Activated CD4-positive, alpha-beta T cell treated with anti-CD3 and anti-CD28 coated beads, Interleukin-2, amount 10 ng/mL, durations not matched to agents 7 days and 5 days (primary cell): ENCODE measurements at regions of chr15 and their contacts with region 1.

Region 1: DNA sequence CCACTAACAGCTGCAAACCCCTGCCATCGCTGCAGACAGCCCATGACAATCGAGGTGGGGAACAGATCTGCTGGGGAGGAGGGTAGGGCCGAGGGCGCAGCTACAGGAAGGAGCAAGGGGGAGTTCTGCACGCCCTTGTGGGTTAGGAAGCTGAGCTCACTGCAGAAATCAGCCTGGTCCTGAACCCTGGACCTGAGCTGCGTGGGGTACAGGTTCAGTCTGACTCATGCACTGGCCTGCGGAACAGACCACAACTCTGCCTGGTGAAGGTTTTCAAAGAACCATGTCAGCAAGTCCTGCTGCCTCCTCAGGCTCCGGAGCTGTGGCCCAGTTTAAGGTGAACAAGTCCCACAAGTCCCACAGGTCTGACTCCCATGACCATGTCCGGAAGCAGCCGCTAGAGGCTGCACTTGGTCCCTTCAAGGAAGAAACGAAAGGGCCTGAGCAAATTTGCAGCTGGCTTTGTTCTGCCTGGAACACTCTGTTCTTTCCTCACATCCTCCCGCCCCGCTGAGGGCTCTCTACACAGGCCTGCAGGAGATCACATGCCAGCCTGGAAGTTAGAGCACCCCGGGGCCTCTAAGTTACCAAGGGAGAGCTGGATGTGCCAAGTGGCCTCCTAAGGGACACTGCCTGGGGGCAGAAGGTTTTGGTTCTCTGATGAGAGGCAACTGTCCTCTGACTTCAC is 49.4 kb upstream of the AKAP13 start:
- DNase-seq: peak; percentile 81
- H3K4me3 Mint-ChIP-seq: peak overlapping the region; percentile 89
- H3K27ac Mint-ChIP-seq: peak overlapping the region; percentile 98
- H3K4me1 Mint-ChIP-seq: peaks cover 54% of the 10 kb centered on the region
- H3K27me3 Mint-ChIP-seq: no peaks in the 10 kb centered on the region

Region 2: DNA sequence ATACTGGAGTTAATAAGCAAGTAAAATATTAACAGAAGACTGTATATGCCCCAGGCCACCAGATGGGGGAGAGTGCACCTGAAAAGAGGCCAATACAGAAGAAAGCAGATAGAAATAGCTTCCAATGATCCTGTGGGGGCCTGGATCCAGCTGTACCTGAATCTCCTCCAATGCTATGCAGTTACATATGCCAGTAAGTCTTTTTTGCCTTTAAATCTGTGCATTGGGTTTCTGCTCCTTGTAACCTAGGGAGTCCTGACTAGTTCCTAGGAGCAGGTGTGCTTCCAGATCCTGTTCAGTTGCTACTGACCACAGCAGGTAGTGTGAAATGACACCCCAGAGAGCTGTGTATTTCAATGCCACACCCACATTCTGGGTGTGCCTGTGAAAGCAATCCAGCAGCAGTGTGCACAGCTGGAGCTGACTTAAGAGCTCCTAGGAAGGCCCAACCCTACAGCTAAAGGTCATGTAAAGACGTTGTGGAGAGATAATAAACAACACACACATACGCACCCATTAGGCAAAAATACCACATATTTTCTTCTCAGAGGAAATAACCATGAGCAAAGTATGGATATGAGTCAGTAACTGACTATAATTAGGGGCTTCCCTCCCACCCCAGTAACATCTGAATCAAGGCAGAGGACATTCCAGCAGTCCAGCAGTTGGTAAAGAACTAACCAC is 12.9 kb before region 1 on chr15:
- CTCF ChIA-PET with region 1: interaction called, 35 read pairs
- POLR2A ChIA-PET with region 1: interaction called, 3 read pairs
- DNase-seq: peak; percentile 36
- H3K4me3 Mint-ChIP-seq: no peak overlapping the region
- H3K27ac Mint-ChIP-seq: peak overlapping the region; percentile 55
- H3K4me1 Mint-ChIP-seq: peaks cover 49% of the 10 kb centered on the region
- H3K27me3 Mint-ChIP-seq: no peaks in the 10 kb centered on the region

Region 3: DNA sequence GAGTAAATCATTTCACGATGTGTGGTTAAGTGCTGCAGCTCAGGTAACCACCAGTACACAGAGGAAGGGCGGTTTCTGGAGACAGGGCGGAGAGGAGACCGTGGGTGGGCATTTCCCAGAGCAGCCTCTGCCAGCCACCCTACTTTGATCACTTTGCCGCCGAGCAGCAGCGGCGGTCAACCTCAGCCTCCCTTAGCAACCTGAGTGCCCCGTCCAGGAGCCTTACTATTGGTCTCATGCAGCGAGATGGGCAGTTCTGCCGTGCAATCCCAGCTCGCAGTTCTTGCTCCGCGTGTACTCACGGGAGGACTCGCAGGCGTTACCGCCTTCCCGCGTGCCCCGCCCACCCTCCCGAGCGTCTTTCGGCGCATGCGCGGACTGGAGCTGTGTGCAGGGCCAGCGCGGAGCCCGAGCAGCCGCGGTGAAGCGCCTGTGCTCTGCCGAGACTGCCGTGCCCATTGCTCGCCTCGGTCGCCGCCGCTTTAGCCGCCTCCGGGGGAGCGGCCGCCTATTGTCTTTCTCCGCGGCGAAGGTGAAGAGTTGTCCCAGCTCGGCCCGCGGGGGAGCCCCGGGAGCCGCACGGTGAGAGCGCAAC is 49.3 kb after region 1 on chr15 and contains the start of gene AKAP13:
- CTCF ChIA-PET with region 1: interaction called, 7 read pairs
- POLR2A ChIA-PET with region 1: interaction called, 12 read pairs
- DNase-seq: peak; percentile 97
- H3K4me3 Mint-ChIP-seq: peak within 1 kb of the TSS; percentile 87
- H3K27ac Mint-ChIP-seq: peak within 1 kb of the TSS; percentile 94
- H3K4me1 Mint-ChIP-seq: peaks cover 64% of the 10 kb centered on the region
- H3K27me3 Mint-ChIP-seq: no peaks in the 10 kb centered on the region
- total RNA-seq, gene AKAP13: 152 to 181 TPM